ENCODE measurements at regions of chr5 and their contacts with region 1.

Region 1: GRCh38 chr5:167998148-167998767 is 293.2 kb upstream of the WWC1 start:
- DNase-seq: peak in 3 of 5 donors; percentile 37 to 40 (median 39)
- ATAC-seq: peak; percentile 80 to 84 (median 82)
- H3K4me3 ChIP-seq: no peak overlapping the region
- H3K27ac ChIP-seq: peak overlapping the region; percentile 41 to 88 (median 66)
- H3K4me1 ChIP-seq: peaks cover 0 to 46% (median 14%) of the 10 kb centered on the region in 12 donors
- H3K27me3 ChIP-seq: no peaks in the 10 kb centered on the region
- CTCF ChIP-seq: no peak
- POLR2A ChIP-seq: no peak

Region 2: DNA sequence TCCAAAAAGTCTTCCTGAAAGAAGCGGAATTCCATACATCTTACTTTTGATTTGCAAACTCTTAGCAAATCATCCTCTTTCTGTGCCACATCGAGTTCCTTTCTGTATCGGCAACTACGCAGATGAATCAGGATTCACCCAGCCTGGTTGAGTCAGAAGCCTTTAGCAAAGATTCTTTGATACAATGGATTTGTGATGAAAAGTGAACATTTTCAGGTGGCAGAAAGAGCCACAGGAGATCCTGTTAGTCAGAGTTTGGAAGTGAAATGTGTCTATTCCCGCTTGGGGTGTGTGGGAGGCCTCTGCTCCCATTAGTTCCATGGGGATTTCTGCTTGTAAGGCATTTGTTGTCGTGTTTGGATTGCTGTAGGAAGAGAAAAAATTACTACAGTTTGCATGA is 58.6 kb before region 1 on chr5:
- intact Hi-C with region 1: loop called in 1 of 10 experiments (anchors 5 kb)
- DNase-seq: no peak
- ATAC-seq: no peak
- H3K4me3 ChIP-seq: no peak overlapping the region
- H3K27ac ChIP-seq: peak overlapping the region in 8 of 12 donors; percentile 0 to 91 (median 86)
- H3K4me1 ChIP-seq: peaks cover 0 to 31% (median 7%) of the 10 kb centered on the region in 12 donors
- H3K27me3 ChIP-seq: no peaks in the 10 kb centered on the region
- CTCF ChIP-seq: no peak
- POLR2A ChIP-seq: no peak